Activated naive CD4-positive, alpha-beta T cell treated with anti-CD3 and anti-CD28 coated beads for 36 hours (primary cell): ENCODE measurements at regions of chr7 and their contacts with region 1.

Region 1: DNA sequence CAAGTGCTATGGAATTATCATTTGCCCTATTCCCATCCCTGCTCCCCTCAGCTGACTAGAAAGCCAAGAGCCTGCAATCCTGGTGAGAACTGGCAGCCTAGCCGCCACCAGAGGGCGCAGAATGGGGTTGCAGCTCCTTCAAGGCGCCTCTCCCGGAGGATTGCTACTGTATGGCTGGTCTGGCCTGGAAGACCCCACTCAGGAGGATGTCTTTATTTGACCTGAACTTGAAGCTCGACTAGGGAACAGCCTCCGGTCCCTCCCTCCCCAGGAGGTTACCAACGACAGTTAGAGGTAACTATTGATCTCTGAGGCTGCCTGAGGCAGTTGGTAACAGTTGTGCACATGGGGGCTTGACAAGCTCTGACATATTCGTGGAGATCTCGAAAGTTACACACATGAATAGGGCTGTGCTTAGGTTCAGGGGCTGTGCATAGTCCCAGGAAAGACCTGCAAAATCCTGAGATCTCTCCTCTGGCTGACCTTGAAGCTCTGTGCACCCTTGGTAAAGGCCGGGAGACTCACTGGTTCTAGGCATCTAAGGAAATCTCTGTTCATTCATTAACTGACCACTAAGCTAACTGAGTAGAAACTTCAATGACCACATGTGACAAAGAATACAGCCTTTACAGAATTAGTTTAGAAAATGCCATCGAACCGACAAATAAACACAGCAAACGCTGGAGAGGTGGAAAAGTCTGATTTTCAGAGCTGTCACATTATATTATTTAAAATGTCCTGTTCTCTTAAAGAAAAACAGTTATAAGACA is 65.7 kb downstream of the TSPAN12 start:
- DNase-seq: peak; percentile 72
- H3K4me3 Mint-ChIP-seq: no peak overlapping the region
- H3K27ac Mint-ChIP-seq: no peak overlapping the region
- H3K4me1 Mint-ChIP-seq: no peaks in the 10 kb centered on the region
- H3K27me3 Mint-ChIP-seq: no peaks in the 10 kb centered on the region

Region 2: GRCh38 chr7:120740348-120740747 is 51.9 kb before region 1 on chr7:
- CTCF ChIA-PET with region 1: no interaction called
- intact Hi-C with region 1: no loop called
- DNase-seq: no peak
- H3K4me3 Mint-ChIP-seq: no peak overlapping the region
- H3K27ac Mint-ChIP-seq: no peak overlapping the region
- H3K4me1 Mint-ChIP-seq: no peaks in the 10 kb centered on the region
- H3K27me3 Mint-ChIP-seq: peaks cover 4% of the 10 kb centered on the region

Region 3: GRCh38 chr7:120941064-120941463 is 148.8 kb after region 1 on chr7:
- CTCF ChIA-PET with region 1: interaction called, 8 read pairs
- intact Hi-C with region 1: loop called (anchors 1 kb)
- DNase-seq: no peak
- H3K4me3 Mint-ChIP-seq: no peak overlapping the region
- H3K27ac Mint-ChIP-seq: no peak overlapping the region
- H3K4me1 Mint-ChIP-seq: no peaks in the 10 kb centered on the region
- H3K27me3 Mint-ChIP-seq: no peaks in the 10 kb centered on the region

Region 4: GRCh38 chr7:121081327-121081936 is 289.2 kb after region 1 on chr7:
- CTCF ChIA-PET with region 1: interaction called, 9 read pairs
- intact Hi-C with region 1: loop called (anchors 1 kb)
- DNase-seq: no peak
- H3K4me3 Mint-ChIP-seq: no peak overlapping the region
- H3K27ac Mint-ChIP-seq: no peak overlapping the region
- H3K4me1 Mint-ChIP-seq: no peaks in the 10 kb centered on the region
- H3K27me3 Mint-ChIP-seq: peaks cover 6% of the 10 kb centered on the region

Region 5: DNA sequence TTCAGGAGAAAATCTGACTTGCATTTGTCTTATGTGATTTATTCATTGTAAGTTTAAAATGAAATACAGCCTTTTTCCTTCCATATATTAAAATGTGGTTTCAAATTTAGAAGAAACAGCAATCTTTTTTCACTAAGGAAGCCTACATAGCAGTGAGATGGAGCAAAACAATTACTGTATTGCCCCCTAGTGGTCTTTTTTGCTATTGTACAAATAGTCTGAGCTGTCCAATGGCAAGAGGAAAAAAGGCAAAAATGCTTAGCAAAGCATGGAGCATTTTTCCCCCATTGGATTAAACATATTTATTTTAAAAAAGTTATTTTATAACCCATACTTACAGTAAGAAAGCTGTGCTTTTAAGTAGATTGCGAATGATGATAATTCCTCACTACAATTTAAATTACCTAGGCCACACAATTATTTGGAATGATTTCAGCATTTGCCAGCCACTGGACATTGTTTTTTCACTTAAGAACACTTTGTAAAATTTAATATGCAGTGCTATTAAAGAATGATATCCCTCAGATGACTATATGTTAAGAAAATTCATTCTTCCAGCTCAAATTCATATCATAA is 315.7 kb after region 1 on chr7:
- CTCF ChIA-PET with region 1: interaction called, 7 read pairs
- intact Hi-C with region 1: loop called (anchors 1 kb)
- DNase-seq: no peak
- H3K4me3 Mint-ChIP-seq: no peak overlapping the region
- H3K27ac Mint-ChIP-seq: no peak overlapping the region
- H3K4me1 Mint-ChIP-seq: no peaks in the 10 kb centered on the region
- H3K27me3 Mint-ChIP-seq: peaks cover 11% of the 10 kb centered on the region